ENCODE measurements at regions of chr7 and their contacts with region 1.

Region 1: DNA sequence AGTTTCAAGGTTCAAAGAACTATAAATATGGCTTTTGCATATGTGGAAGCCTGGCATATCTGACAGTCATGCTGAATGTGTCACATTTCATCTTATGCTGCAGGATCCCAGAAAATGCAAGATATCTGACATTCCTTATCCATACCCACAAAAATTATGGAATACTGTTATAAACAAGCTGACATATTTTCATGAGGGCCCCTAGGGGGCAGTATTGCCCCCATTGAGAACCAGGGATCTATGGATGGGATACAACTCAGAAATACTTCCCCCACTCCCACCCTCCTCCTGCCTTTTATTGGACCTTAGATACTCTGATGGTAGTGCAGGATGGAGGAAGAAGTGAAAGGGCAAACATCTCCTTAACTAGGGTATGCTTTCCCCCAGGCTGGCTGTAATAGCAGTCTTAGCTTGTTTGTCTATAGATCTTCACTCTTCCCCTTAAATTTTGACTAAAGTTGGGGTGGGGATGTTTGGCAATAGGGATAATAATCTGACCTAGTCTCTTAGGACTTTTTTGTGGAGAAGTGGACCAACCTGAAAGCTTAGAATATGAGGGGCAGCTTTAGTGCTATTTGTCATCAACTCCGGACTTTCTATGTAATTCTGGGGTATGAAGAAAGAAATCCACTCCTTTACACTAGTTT is 3.5 kb upstream of the GNGT1 start:
- DNase-seq: no peak
- ATAC-seq: peak; percentile 54

Region 2: GRCh38 chr7:93861325-93861949 is 41.5 kb before region 1 on chr7:
- intact Hi-C with region 1: no loop called
- DNase-seq: no peak
- ATAC-seq: no peak

Region 3: GRCh38 chr7:93944673-93945072 is 41.8 kb after region 1 on chr7:
- intact Hi-C with region 1: loop called (anchors 5 kb)
- DNase-seq: no peak
- ATAC-seq: no peak

Region 4: DNA sequence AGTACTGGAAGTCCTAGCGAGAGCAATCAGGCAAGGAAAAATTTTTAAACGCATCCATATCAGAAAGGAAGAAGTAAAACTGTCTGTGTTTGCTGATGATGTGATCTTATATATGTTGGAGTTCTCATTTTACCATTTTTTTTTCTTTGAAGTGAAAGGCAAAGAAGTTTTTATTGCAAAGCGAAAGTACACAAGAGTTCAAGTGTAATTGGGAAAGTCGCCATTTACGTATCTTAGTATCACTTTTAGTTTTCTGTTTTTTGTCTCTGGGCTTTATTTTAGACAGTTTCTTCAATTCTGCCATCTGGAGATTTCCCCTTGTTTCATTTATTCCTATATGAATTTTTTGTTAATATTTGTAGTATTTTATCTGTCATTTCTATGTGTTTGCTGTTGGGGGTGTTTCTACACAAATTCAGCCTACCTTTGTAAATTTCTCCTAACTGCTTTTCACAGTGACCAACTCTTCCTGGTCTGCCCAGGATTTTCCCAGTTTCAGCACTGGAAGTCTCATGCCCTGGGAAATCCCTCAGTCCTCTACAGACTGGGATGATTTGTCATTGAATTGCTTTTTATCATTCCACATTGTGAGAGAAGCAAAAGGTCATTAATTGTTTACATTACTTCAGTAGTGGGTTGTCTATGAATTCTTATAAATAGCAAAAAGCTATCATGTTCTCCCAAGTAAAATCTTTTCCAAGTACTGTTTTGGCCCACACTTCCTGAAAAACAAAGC is 78.0 kb after region 1 on chr7:
- intact Hi-C with region 1: no loop called
- DNase-seq: no peak
- ATAC-seq: no peak

Region 5: GRCh38 chr7:94004024-94004951 is 101.4 kb after region 1 on chr7 and contains the start of gene BET1:
- intact Hi-C with region 1: loop called (anchors 5 kb)
- DNase-seq: peak; percentile 99
- ATAC-seq: peak; percentile 99
- total RNA-seq, gene BET1: 14.2 TPM

Region 6: DNA sequence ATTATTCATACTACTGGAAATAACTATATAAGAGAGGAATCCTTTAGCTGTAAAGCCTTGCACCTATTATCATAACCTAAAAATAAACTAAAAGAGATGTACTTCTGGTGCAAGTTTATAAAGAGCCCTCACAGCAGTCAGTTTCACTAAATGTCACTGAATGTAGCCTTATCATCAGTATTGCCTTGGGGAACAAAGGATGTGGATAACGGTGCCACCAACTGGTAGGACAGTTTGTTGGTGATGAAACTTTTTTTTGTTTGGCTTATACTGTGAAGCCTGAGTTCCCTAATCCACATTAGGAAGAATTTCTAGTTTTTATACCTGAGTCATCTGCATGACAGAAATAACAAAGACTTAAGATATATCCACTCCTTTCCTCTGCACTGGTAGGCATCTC is 373.9 kb after region 1 on chr7:
- intact Hi-C with region 1: loop called (anchors 10 kb)
- DNase-seq: no peak
- ATAC-seq: peak; percentile 72

Measured in Right ventricle myocardium inferior (tissue), 1 donor.